ENCODE measurements at regions of chr11 and their contacts with region 1.

Region 1: DNA sequence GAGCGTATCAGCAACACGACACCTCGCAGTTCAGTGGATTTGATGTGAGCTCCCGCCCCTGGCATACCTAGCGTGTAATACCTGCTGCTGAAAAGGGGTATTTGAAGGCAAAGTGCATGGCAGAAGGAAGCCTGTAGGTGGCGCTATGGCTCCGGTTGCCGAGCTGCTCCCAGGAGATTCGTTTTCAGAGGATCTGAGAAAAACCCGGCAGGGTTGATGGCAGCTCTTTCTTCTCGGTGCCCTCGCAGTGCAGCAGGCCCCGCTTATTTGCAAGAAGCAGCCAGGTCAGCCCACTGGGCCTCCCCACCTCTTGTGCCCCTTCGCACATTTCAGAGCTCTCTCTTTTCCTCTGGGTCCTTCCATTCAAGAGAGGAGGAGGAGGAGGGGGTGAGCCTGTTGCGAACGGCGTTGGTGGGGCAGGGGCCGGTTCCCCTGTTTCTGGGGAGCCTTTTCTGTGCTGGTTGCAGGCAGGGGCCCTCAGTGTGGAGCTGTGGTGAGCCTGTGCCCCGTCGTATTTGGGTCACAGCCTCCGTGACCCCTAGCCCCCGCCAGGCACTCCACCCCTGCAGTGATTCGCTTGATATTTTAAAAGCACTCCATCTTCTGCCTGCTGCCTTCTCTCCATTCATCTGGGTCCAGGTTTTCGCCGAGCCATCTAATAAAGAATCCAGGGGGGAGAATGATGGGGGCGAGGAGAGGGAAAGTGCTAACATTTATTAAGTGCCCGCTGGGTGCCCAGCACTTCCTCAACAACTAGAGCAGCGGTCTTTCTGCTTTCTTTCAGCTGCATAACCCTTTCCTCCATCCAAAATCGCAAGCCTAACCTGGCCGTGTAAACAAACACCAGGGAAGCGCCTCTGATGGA is 85.3 kb upstream of the SYT13 start:
- DNase-seq: peak; percentile 93
- ATAC-seq: peak; percentile 91
- H3K4me3 Mint-ChIP-seq: peak overlapping the region; percentile 65
- H3K27ac Mint-ChIP-seq: no peak overlapping the region
- H3K4me1 Mint-ChIP-seq: peaks cover 16% of the 10 kb centered on the region
- H3K27me3 Mint-ChIP-seq: peaks cover 13% of the 10 kb centered on the region
- CTCF ChIP-seq: peak; percentile 93

Region 2: DNA sequence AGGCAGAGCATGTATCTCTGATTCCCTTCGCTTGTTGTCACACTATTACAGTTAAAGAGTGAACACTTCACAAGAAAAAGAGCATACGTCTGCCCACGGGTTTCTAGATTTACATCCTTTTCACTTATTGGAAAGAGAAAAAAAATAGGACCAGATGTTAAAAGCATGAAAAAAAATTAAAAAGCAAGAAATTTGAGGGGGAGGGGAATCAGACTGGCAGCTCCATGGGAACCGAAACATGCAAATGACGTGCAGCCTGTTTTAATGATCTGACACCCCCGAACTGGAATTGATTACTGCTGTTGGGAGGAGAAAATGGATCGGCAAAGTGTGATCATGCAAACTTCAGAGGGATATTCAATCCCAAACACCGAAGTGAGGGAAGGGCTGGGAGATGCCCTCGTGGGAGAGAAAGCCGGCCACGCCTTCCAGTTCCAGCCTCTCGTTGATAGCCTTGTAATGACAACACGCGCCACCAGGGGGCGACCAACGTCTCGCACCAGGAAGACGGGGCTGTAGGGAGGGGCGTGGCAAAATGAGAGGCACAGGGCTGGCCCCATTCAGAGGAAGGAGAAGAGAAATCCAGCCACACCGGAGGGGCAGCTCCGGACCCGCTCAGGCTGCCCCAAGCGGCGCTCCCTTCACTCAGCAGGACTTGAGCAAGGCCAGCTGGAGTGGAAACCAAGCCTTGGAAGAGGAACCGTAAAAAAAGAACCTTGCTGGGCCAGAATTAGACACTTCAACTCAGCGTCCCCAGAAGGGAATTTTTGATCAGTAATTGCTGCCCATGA is 31.6 kb before region 1 on chr11:
- CTCF ChIA-PET with region 1: interaction called, 36 read pairs
- POLR2A ChIA-PET with region 1: no interaction called
- DNase-seq: peak; percentile 98
- ATAC-seq: peak; percentile 99
- H3K4me3 Mint-ChIP-seq: peak overlapping the region; percentile 58
- H3K27ac Mint-ChIP-seq: peak overlapping the region; percentile 26; the same call in 1 of the 2 replicates
- H3K4me1 Mint-ChIP-seq: peaks cover 40% of the 10 kb centered on the region
- H3K27me3 Mint-ChIP-seq: no peaks in the 10 kb centered on the region; the same call in 1 of the 2 replicates
- CTCF ChIP-seq: peak; percentile 95

Region 3: GRCh38 chr11:45400591-45400990 is 29.1 kb after region 1 on chr11:
- CTCF ChIA-PET with region 1: interaction called, 24 read pairs
- POLR2A ChIA-PET with region 1: no interaction called
- DNase-seq: no peak
- ATAC-seq: no peak
- H3K4me3 Mint-ChIP-seq: no peak overlapping the region
- H3K27ac Mint-ChIP-seq: no peak overlapping the region
- H3K4me1 Mint-ChIP-seq: peaks cover 19% of the 10 kb centered on the region
- H3K27me3 Mint-ChIP-seq: no peaks in the 10 kb centered on the region
- CTCF ChIP-seq: no peak

Region 4: DNA sequence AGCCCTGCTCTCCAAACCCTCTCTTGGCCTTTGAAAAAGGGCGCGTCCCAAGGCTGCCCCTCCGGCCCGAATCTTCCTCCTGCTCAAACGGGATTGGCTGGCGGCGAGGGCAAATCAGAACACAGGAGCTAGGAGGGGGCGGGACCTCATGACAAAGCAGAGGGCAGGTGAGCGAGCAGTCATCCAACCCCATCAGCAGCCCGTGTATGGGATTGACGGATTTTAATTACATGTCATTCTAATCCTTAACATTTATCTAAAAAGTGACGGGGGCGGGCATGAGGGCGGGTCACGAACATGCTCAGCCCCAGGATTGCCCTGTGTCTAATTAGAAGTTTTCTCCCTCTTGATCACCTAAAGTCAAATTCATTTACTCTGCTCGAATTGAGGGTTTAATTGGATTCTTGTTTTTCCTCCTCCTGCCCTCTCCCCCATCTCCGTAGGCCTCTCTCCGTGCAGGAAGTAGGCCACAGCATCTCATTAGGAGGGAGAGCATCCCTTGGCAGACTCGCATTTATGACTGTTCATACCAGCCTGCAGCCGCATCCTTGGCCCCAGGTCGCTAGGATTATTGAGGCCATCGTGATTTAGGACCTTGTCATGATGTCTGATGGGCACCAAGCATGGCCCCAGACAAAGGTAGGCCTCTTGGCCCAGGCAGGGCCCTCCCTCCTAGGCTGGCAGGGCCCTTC is 146.8 kb after region 1 on chr11:
- CTCF ChIA-PET with region 1: interaction called, 12 read pairs
- POLR2A ChIA-PET with region 1: no interaction called
- DNase-seq: peak; percentile 82
- ATAC-seq: peak; percentile 99
- H3K4me3 Mint-ChIP-seq: no peak overlapping the region
- H3K27ac Mint-ChIP-seq: no peak overlapping the region; the same call in 1 of the 2 replicates
- H3K4me1 Mint-ChIP-seq: peaks cover 12% of the 10 kb centered on the region
- H3K27me3 Mint-ChIP-seq: peaks cover 19% of the 10 kb centered on the region
- CTCF ChIP-seq: no peak

Region 5: GRCh38 chr11:45606514-45607281 is 235.2 kb after region 1 on chr11:
- CTCF ChIA-PET with region 1: interaction called, 13 read pairs
- POLR2A ChIA-PET with region 1: no interaction called
- DNase-seq: peak; percentile 81
- ATAC-seq: peak; percentile 88
- H3K4me3 Mint-ChIP-seq: no peak overlapping the region
- H3K27ac Mint-ChIP-seq: no peak overlapping the region
- H3K4me1 Mint-ChIP-seq: peaks cover 17% of the 10 kb centered on the region
- H3K27me3 Mint-ChIP-seq: no peaks in the 10 kb centered on the region; the same call in 1 of the 2 replicates
- CTCF ChIP-seq: no peak

Region 6: GRCh38 chr11:45671246-45672171 is 300.0 kb after region 1 on chr11:
- CTCF ChIA-PET with region 1: interaction called, 10 read pairs
- POLR2A ChIA-PET with region 1: no interaction called
- DNase-seq: no peak
- ATAC-seq: peak; percentile 67
- H3K4me3 Mint-ChIP-seq: no peak overlapping the region
- H3K27ac Mint-ChIP-seq: no peak overlapping the region
- H3K4me1 Mint-ChIP-seq: peaks cover 8% of the 10 kb centered on the region; the same call in 1 of the 2 replicates
- H3K27me3 Mint-ChIP-seq: peaks cover 20% of the 10 kb centered on the region
- CTCF ChIP-seq: no peak